ENCODE measurements at regions of chr3 and their contacts with region 1.

Region 1: GRCh38 chr3:73572368-73572767 is 52.4 kb downstream of the PDZRN3 start:
- DNase-seq: no peak

Region 2: GRCh38 chr3:72722930-72723726 is 849.2 kb before region 1 on chr3:
- intact Hi-C with region 1: no loop called
- DNase-seq: peak in 6 of 10 donors; percentile 13 to 92 (median 42)

Region 3: DNA sequence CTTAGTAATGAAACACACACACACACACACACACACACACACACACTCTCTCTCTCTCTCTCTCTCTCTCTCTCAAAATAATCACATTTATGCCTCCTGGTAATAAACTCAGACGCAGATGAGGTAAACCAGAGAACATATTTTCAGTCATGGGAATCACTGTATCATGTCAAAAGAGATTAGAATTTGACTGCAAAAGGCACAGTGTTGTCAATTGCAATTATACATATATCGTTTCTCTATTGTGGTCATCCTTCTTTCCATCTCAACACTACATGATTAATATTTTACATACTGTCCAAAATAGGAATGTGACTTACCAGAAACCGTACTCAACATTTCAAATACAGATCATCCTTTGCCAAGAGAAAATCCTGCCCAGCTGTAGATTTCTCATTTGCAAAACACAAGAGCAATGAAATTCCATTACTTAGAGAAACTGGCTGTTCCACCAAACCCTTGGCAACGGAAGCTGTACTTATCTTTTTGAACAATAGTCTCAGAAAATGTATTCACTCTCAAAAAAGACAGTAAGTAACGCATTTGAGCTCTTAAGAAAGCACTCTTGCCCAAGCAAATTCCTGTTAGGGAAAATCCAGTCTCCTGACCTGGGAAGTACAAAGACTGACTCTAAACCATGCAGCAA is 28.0 kb after region 1 on chr3:
- intact Hi-C with region 1: loop called (anchors 2 kb)
- DNase-seq: no peak

Region 4: DNA sequence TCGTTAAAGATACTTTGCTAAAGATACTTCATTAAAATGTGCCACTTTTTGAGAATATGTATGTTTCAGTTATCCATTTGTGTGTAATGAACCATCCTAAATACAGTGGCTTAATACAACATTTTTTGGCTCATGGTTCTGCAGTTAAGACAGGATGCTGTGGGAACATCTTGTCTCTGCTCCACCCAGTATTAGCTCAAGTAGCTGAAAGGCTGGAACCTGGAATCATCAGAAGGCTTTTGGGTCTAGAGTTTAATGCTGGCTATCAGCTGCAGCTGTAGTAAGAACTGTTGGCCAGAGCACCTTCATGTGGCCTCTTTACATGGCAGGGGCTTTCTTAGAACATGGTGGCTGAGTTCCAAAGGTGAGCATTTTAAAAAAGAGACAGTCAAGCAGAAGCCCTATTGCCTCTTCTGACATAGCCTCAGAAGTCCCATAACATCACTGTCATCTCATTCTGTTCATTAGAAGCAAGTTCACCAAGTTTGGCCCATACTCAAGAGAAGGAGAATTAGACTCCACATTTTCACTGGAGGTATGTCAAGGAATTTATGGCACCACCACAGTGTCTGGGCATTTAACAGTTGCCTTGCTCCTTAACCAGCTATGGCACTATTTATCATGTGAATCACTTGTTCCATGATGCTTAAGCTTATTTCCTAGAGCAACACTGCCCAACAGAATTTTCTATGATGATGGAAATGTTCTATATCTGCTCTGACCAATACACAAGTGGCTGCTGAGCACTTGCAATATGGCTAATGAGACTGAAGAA is 122.8 kb after region 1 on chr3:
- intact Hi-C with region 1: no loop called
- DNase-seq: no peak

Measured in posterior cingulate gyrus (tissue), 11 donors.